ENCODE measurements at regions of chr13 and their contacts with region 1.

Region 1: GRCh38 chr13:20002787-20003186 is 44.3 kb downstream of the ZMYM2 start:
- DNase-seq: no peak
- H3K27ac ChIP-seq: no peak overlapping the region
- CTCF ChIP-seq: no peak

Region 2: GRCh38 chr13:19845758-19846157 is 157.0 kb before region 1 on chr13:
- CTCF ChIA-PET with region 1: no interaction called
- POLR2A ChIA-PET with region 1: no interaction called
- DNase-seq: peak; percentile 97
- H3K27ac ChIP-seq: no peak overlapping the region
- CTCF ChIP-seq: no peak

Region 3: GRCh38 chr13:19984430-19985218 is 18.2 kb before region 1 on chr13:
- CTCF ChIA-PET with region 1: interaction called, 11 read pairs
- POLR2A ChIA-PET with region 1: interaction called, 6 read pairs
- DNase-seq: peak; percentile 24
- H3K27ac ChIP-seq: no peak overlapping the region
- CTCF ChIP-seq: peak; percentile 47

Region 4: GRCh38 chr13:20043207-20043925 is 40.6 kb after region 1 on chr13:
- CTCF ChIA-PET with region 1: no interaction called
- POLR2A ChIA-PET with region 1: no interaction called
- DNase-seq: no peak
- H3K27ac ChIP-seq: peak overlapping the region; percentile 24; the same call in 1 of the 2 replicates
- CTCF ChIP-seq: no peak

Region 5: DNA sequence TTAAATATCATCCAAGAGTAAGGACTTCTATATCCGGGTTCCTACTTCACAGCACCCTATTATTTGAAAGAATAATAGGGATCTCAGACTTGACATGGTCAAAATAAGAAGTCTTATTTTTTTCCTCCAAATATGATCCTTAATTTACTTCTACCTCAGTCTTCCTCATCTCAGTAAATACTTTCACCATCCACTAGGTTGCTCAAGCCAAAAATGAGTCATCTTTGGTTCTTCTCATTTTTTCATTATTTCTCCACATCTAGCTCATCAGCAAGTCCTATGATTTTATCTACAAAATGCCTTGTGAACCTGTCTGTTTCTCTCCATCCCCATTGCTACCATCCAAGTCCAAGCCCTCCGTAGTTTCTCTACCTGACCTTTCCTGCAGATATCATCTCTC is 351.2 kb after region 1 on chr13:
- CTCF ChIA-PET with region 1: no interaction called
- POLR2A ChIA-PET with region 1: no interaction called
- DNase-seq: no peak
- H3K27ac ChIP-seq: no peak overlapping the region
- CTCF ChIP-seq: no peak; the same call in 1 of the 2 replicates

Measured in RWPE1 (cell line).